CD8-positive, alpha-beta T cell (primary cell): ENCODE measurements at regions of chr2 and their contacts with region 1.

Region 1: DNA sequence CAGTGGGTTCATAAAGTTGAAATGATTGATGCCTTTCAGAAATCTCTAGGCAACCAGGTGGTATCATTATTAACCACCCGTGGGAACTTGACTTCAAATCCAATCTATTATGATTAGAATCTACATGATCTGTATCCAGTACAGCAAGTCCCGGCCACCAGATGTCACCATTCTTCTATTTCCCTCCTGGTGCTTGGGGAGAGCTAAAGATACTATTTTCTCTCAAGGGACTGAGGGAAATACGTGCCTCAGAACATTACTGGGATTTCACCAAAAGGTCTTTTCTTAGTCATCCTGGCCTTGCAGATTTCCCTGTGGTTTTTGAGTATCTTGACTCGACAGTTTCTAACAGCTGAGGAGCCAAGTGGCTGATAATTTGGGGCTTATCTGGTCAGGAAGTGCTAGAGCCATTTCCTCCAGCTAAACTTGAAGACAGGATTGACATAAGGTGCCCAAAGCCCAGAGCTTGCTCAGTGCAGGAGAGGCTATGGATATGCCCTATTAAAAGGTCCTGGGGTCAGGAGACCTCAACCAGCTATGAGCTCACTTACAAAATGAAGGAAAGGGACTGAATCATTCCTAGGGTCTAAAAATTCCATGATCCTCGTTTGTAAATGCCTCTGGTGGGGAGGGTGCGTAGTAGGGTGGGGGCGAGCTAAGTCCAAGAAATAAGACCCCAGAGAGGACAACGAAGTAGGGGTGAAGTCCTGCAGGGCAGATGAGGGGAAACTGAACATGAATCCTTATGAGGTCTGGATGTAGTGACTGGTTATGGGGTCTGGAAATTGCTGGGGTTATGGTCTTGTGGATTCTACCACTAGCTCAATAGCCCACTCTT is 135.4 kb upstream of the MGAT5 start:
- DNase-seq: peak; percentile 67 to 90 (median 85)
- ATAC-seq: peak; percentile 22
- H3K4me3 ChIP-seq: no peak overlapping the region
- H3K4me3 Mint-ChIP-seq: peak overlapping the region; percentile 99
- H3K27ac ChIP-seq: no peak overlapping the region
- H3K27ac Mint-ChIP-seq: peak overlapping the region; percentile 1
- H3K4me1 ChIP-seq: peaks cover 34% of the 10 kb centered on the region
- H3K4me1 Mint-ChIP-seq: peaks cover 35% of the 10 kb centered on the region
- H3K27me3 ChIP-seq: no peaks in the 10 kb centered on the region
- H3K27me3 Mint-ChIP-seq: no peaks in the 10 kb centered on the region
- CTCF ChIP-seq: peak; percentile 85

Region 2: GRCh38 chr2:133993160-133993559 is 125.3 kb before region 1 on chr2:
- CTCF ChIA-PET with region 1: no interaction called
- POLR2A ChIA-PET with region 1: no interaction called
- intact Hi-C with region 1: no loop called
- DNase-seq: no peak
- ATAC-seq: no peak
- H3K4me3 ChIP-seq: no peak overlapping the region
- H3K4me3 Mint-ChIP-seq: no peak overlapping the region
- H3K27ac ChIP-seq: no peak overlapping the region
- H3K27ac Mint-ChIP-seq: no peak overlapping the region
- H3K4me1 ChIP-seq: no peaks in the 10 kb centered on the region
- H3K4me1 Mint-ChIP-seq: no peaks in the 10 kb centered on the region
- H3K27me3 ChIP-seq: no peaks in the 10 kb centered on the region
- H3K27me3 Mint-ChIP-seq: peaks cover 25% of the 10 kb centered on the region
- CTCF ChIP-seq: no peak

Region 3: DNA sequence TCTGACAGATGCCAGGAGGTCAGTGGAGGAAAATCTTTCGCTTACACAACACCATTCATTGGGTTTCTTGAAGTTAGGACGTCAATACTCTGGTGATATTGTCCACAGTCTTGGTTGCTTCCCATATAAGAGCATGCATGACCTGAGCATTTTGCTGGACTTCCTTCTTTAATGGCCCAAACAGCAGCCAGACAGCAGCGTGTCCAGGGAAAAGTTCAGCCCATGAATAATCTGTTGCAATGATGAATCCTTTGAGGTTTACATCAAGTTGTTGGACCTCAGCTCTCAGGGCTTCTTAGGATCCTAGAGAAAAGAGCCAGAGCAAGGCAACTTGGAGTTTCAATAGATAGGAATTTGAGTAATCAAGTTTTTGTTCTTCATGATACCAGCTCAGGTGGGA is 20.2 kb before region 1 on chr2:
- CTCF ChIA-PET with region 1: no interaction called
- POLR2A ChIA-PET with region 1: no interaction called
- intact Hi-C with region 1: no loop called
- DNase-seq: no peak
- ATAC-seq: no peak
- H3K4me3 ChIP-seq: no peak overlapping the region
- H3K4me3 Mint-ChIP-seq: no peak overlapping the region
- H3K27ac ChIP-seq: no peak overlapping the region
- H3K27ac Mint-ChIP-seq: no peak overlapping the region
- H3K4me1 ChIP-seq: no peaks in the 10 kb centered on the region
- H3K4me1 Mint-ChIP-seq: no peaks in the 10 kb centered on the region
- H3K27me3 ChIP-seq: no peaks in the 10 kb centered on the region
- H3K27me3 Mint-ChIP-seq: peaks cover 14% of the 10 kb centered on the region
- CTCF ChIP-seq: no peak

Region 4: DNA sequence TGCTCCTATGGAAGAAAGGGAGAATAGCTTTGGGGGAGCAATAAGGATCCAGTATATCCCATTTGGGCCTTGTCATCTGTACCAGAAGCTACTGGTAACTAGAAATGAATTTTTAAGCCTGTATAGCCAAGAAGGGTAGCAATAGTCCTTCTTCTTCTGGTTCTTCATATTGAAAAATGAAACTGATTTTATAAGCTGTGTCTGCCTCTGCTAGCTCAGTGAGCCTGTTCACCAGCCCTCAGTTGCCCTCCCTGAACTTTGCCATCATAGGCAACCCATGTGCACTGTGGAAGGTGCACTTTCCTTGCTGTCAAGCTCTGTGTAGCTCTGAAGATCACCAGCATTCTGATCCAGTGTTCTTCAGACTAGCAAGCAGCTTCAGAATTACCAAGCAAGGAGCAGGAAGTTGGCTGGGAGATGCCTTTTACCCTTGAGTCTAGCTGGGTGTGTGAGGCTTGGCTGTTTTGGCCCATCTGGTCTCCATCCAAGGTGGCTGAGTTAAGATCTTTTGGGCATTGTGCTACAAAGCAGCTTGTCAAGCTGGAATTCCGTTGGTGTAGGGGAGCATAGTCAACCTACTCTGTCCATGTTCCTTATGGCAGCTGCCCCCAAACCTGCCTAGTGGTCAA is 79.6 kb after region 1 on chr2:
- CTCF ChIA-PET with region 1: interaction called, 211 read pairs
- POLR2A ChIA-PET with region 1: interaction called, 9 read pairs
- intact Hi-C with region 1: no loop called
- DNase-seq: no peak
- ATAC-seq: peak; percentile 26
- H3K4me3 ChIP-seq: no peak overlapping the region
- H3K4me3 Mint-ChIP-seq: peak overlapping the region; percentile 27
- H3K27ac ChIP-seq: peak overlapping the region in 1 of 2 experiments; percentile 6
- H3K27ac Mint-ChIP-seq: peak overlapping the region; percentile 67
- H3K4me1 ChIP-seq: peaks cover 22% of the 10 kb centered on the region
- H3K4me1 Mint-ChIP-seq: peaks cover 79% of the 10 kb centered on the region
- H3K27me3 ChIP-seq: no peaks in the 10 kb centered on the region
- H3K27me3 Mint-ChIP-seq: no peaks in the 10 kb centered on the region
- CTCF ChIP-seq: no peak

Region 5: GRCh38 chr2:134245340-134245984 is 127.0 kb after region 1 on chr2:
- CTCF ChIA-PET with region 1: interaction called, 102 read pairs
- POLR2A ChIA-PET with region 1: interaction called, 13 read pairs
- intact Hi-C with region 1: loop called (anchors 1 kb)
- DNase-seq: peak; percentile 56 to 86 (median 78)
- ATAC-seq: peak; percentile 59
- H3K4me3 ChIP-seq: peak overlapping the region in 1 of 2 experiments; percentile 4
- H3K4me3 Mint-ChIP-seq: peak overlapping the region; percentile 0
- H3K27ac ChIP-seq: no peak overlapping the region
- H3K27ac Mint-ChIP-seq: peak overlapping the region; percentile 49
- H3K4me1 ChIP-seq: peaks cover 58% of the 10 kb centered on the region
- H3K4me1 Mint-ChIP-seq: peaks cover 88% of the 10 kb centered on the region
- H3K27me3 ChIP-seq: no peaks in the 10 kb centered on the region
- H3K27me3 Mint-ChIP-seq: no peaks in the 10 kb centered on the region
- CTCF ChIP-seq: peak; percentile 85

Region 6: DNA sequence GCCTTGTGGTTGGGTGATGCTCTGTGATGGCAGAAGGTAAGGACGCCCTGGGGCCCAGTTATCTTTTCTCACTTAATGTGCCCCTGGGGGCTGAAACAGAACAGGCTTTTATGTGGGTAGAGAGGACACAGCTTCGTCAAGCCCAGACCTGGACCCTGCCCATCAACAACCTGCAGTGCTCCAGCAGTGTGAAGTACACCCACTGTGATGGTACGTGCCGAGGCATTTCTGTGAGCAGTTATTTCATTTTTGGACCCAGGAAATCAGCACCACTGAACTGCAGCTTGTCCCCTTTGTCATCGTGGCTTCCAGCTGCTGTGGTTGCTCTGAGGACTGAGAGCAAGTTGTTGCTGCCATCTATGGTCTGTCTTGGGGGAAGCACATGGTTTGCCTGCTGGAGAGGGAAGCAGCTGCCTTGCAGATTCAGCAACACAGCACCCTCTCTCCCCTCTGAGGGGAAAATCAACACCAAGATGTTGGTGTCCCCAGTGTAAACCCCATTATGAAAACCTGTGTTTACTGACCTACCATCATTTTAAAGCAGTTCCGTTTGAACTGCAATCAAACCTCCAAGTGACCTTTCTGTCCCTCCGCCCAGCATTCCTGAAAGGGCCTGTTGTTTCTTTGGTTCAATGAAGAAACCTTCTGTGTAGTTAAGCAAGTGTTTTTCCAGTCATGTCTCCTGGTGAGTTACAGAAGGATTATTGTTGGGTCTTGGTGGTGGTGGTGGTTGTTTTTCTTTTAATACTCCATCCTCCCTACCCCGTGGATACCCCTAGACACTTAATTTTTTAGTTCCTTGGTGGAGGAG is 293.5 kb after region 1 on chr2:
- CTCF ChIA-PET with region 1: interaction called, 138 read pairs
- POLR2A ChIA-PET with region 1: interaction called, 11 read pairs
- intact Hi-C with region 1: loop called (anchors 1 kb)
- DNase-seq: peak; percentile 41 to 83 (median 68)
- ATAC-seq: peak; percentile 95
- H3K4me3 ChIP-seq: no peak overlapping the region
- H3K4me3 Mint-ChIP-seq: no peak overlapping the region
- H3K27ac ChIP-seq: no peak overlapping the region
- H3K27ac Mint-ChIP-seq: peak overlapping the region; percentile 19
- H3K4me1 ChIP-seq: peaks cover 6% of the 10 kb centered on the region
- H3K4me1 Mint-ChIP-seq: peaks cover 48% of the 10 kb centered on the region
- H3K27me3 ChIP-seq: no peaks in the 10 kb centered on the region
- H3K27me3 Mint-ChIP-seq: no peaks in the 10 kb centered on the region
- CTCF ChIP-seq: peak; percentile 67

Region 7: GRCh38 chr2:134897932-134898331 is 779.4 kb after region 1 on chr2:
- CTCF ChIA-PET with region 1: interaction called, 5 read pairs
- POLR2A ChIA-PET with region 1: no interaction called
- intact Hi-C with region 1: loop called (anchors 1 to 5 kb)
- DNase-seq: peak in 2 of 9 experiments; percentile 9 to 29
- ATAC-seq: no peak
- H3K4me3 ChIP-seq: no peak overlapping the region
- H3K4me3 Mint-ChIP-seq: no peak overlapping the region
- H3K27ac ChIP-seq: no peak overlapping the region
- H3K27ac Mint-ChIP-seq: no peak overlapping the region
- H3K4me1 ChIP-seq: no peaks in the 10 kb centered on the region
- H3K4me1 Mint-ChIP-seq: no peaks in the 10 kb centered on the region
- H3K27me3 ChIP-seq: no peaks in the 10 kb centered on the region
- H3K27me3 Mint-ChIP-seq: no peaks in the 10 kb centered on the region
- CTCF ChIP-seq: peak; percentile 67

Region 8: DNA sequence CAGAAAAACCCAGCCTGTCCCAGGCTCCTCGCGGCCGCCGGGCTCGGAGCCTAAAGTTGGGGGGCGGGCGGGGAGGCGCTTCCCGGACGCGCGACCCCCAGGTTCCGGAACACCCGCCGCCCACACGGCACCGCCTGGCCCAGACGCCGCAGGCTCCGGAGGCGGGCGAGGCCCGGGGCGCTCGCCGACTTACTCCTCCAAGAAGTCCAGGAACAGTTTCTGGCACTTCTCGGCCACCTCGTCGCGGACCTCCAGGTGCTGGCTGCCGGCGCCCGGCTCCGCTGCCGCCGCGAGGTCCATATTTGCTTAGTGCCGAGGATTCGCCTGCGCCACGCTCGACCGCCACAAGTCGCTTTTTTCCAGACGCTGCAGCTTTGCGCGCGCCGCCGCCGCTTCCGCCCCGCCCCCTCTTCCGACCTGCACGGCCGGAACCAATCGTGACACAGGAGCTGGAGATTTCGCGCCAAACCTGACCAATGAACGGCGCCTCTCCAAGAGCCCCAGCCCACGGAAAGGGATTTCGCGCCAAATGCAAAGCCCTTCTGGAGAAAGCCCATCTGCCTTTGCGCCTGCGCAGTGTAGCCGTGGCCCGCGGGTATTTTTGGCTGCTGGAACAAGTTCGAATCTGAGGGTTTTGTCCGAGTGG is 1757.7 kb after region 1 on chr2 and contains the start of gene MCM6:
- CTCF ChIA-PET with region 1: no interaction called
- POLR2A ChIA-PET with region 1: no interaction called
- intact Hi-C with region 1: loop called in 1 of 2 experiments (anchors 5 kb)
- DNase-seq: peak; percentile 95 to 99 (median 97)
- ATAC-seq: peak; percentile 89
- H3K4me3 ChIP-seq: peak within 1 kb of the TSS; percentile 81 to 82
- H3K4me3 Mint-ChIP-seq: peak within 1 kb of the TSS; percentile 92
- H3K27ac ChIP-seq: peak within 1 kb of the TSS; percentile 85 to 96
- H3K27ac Mint-ChIP-seq: peak within 1 kb of the TSS; percentile 97
- H3K4me1 ChIP-seq: peaks cover 18% of the 10 kb centered on the region
- H3K4me1 Mint-ChIP-seq: peaks cover 37% of the 10 kb centered on the region
- H3K27me3 ChIP-seq: no peaks in the 10 kb centered on the region
- H3K27me3 Mint-ChIP-seq: no peaks in the 10 kb centered on the region
- CTCF ChIP-seq: no peak
- total RNA-seq, gene MCM6: 37.3 to 38.8 TPM